ENCODE measurements at regions of chr1 and their contacts with region 1.

Region 1: GRCh38 chr1:39098546-39099250 is 72.5 kb downstream of the NDUFS5 start:
- DNase-seq: peak; percentile 60 to 66
- H3K4me3 ChIP-seq: no peak overlapping the region
- H3K27ac ChIP-seq: no peak overlapping the region
- H3K4me1 ChIP-seq: no peaks in the 10 kb centered on the region
- H3K27me3 ChIP-seq: no peaks in the 10 kb centered on the region
- CTCF ChIP-seq: peak; percentile 58 to 84 (median 75)
- POLR2A ChIP-seq: no peak

Region 2: DNA sequence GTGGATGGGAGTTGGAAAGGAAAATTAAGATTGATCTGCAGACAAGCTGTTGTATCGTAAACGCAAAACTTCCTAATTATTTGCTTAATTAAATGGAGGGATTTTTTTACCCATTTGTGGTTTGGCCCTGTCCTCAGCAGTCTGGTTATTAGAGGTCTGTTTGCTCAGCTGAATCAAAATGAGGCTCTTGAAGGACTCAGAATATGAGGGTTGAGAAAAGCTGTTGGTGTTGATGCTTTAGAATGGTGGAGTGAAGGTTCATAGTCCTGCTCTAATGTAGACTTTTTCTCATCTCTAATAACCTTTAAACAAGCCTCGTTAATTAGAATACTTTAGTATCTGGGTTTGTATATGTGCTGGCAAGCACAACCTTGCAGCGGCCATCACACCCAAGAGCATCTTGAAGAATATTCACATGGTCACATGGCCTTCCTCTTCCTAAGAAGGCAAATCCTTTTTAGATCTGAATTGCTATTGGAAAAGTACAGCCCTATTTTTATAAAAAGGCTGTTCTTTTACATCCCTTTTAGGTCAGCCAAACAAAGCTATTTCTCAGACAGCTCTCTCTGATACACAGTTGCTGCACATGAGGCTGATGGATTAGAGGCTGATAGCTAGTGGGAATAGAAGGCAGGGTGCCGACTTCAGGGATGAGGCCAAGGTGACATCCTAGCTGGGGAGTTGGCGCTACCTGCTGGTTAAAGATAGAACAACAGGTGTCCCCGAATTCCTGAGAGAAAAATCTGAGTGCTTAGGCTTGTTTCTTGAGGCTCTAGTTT is 159.6 kb after region 1 on chr1:
- intact Hi-C with region 1: loop called (anchors 5 kb)
- DNase-seq: peak; percentile 80 to 83
- H3K4me3 ChIP-seq: no peak overlapping the region
- H3K27ac ChIP-seq: peak overlapping the region; percentile 60 to 80
- H3K4me1 ChIP-seq: no peaks in the 10 kb centered on the region
- H3K27me3 ChIP-seq: no peaks in the 10 kb centered on the region
- CTCF ChIP-seq: peak; percentile 85 to 93 (median 88)
- POLR2A ChIP-seq: no peak

Region 3: DNA sequence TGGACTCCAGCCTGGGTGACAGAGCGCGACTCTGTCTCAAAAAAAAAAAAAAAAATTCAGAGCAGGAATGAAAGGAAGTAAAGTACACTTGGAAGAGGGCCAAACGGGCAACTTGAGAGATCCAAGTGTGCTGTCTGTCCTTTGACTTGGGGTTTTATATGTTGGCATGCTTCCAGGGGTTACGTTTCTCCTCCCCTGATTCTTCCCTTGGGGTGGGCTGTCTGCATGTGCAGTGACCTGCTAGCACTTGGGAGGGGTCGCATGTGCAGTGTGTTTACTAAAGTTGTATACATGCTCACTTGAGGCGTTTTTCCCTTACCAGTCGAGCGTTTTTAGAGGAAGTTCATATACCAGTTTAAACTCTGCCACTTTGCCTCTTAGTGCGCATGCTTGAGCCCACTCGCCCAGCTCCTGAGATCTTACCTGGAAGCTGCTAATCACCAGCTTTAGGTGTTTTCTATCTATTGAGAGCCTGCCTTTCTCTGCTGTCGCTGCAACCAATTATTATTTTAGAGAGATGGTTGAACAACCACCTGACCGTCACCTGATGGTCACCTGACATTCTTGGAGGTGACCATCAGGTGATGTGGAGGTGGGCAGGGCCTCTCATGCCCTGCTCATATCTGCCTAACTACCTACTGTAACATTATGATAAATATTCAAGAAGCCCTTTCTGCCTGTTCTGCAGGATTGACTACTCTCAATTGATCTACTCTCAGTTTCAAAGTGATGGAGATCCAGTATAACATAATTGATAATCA is 245.9 kb after region 1 on chr1:
- intact Hi-C with region 1: no loop called
- DNase-seq: no peak
- H3K4me3 ChIP-seq: no peak overlapping the region
- H3K27ac ChIP-seq: no peak overlapping the region
- H3K4me1 ChIP-seq: no peaks in the 10 kb centered on the region
- H3K27me3 ChIP-seq: no peaks in the 10 kb centered on the region
- CTCF ChIP-seq: no peak
- POLR2A ChIP-seq: no peak

Region 4: DNA sequence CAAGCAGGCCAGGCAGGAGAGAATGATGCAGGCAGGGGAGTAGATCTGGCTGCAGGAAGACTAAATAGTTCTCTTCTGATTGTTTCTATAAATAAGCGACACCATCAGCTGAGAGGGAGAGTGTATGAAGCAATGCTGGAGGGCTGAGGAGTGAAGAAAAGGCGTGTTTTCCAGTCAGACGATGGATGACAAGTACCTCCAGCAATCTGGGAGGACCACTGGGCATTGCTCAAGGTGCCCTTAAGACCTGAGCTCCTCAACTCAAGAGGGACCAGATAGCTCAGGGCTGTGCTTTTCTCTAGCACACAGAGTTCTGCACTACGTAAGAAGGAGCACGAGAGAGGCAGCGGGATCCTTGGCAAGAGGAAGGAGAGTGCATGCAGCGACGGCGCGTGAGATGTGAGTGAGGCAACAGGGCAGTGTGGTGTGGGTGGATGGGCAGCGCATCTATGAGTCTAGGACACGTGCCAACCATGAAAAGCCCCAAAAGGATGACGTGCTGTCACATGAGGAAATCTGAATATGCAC is 441.9 kb after region 1 on chr1:
- intact Hi-C with region 1: loop called (anchors 10 kb)
- DNase-seq: peak; percentile 79 to 82
- H3K4me3 ChIP-seq: no peak overlapping the region
- H3K27ac ChIP-seq: peak overlapping the region; percentile 70 to 88
- H3K4me1 ChIP-seq: no peaks in the 10 kb centered on the region
- H3K27me3 ChIP-seq: no peaks in the 10 kb centered on the region
- CTCF ChIP-seq: no peak
- POLR2A ChIP-seq: no peak

Measured in uterus (tissue), 4 donors.